ENCODE measurements at regions of chr14 and their contacts with region 1.

Region 1: DNA sequence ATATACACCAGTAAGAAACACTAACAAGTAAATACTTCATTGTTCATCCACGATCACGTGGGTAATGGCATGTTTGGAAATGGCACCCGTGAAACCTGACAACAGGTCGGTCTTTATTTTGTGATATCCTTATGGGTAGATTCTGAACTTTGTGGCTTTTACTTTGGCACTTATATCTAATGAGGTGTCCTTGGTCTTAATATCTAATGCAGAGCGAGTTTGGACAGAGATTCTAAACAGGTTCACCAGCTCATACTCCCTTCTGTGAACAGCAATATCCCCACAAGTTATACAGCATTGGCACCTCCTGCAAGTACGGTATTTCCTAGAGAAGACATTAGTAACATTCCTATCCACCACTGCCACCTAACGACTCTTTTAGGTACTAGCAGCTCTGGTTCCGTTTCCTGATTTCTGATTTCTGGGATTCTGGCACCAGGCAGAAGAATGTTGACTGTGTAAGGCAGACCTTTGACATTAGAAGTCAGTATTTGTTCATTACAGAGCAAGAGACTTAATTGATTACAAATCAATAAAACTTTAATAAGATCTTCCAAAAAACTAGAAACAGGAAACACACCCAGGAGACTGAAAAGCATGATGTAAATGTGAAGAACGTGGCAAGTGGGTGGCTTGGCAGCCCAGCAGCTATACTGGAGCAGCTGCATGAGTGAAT is 2.4 kb downstream of the ANG start:
- DNase-seq: peak in 7 of 9 donors; percentile 48 to 69 (median 63)
- ATAC-seq: peak; percentile 97
- H3K4me3 ChIP-seq: no peak overlapping the region
- H3K4me3 Mint-ChIP-seq: no peak overlapping the region
- H3K27ac ChIP-seq: no peak overlapping the region
- H3K27ac Mint-ChIP-seq: peak overlapping the region in 1 of 9 donors; percentile 32
- H3K4me1 ChIP-seq: no peaks in the 10 kb centered on the region
- H3K4me1 Mint-ChIP-seq: peaks cover 0 to 16% (median 6%) of the 10 kb centered on the region in 7 donors
- H3K27me3 ChIP-seq: no peaks in the 10 kb centered on the region
- H3K27me3 Mint-ChIP-seq: no peaks in the 10 kb centered on the region

Region 2: GRCh38 chr14:20305265-20306078 is 385.5 kb before region 1 on chr14 and contains the start of gene TTC5:
- CTCF ChIA-PET with region 1: no interaction called
- POLR2A ChIA-PET with region 1: no interaction called
- intact Hi-C with region 1: no loop called
- DNase-seq: peak; percentile 82 to 96 (median 89)
- ATAC-seq: peak; percentile 100
- H3K4me3 ChIP-seq: peak within 1 kb of the TSS; percentile 64
- H3K4me3 Mint-ChIP-seq: peak within 1 kb of the TSS; percentile 88 to 99 (median 94)
- H3K27ac ChIP-seq: peak within 1 kb of the TSS; percentile 75
- H3K27ac Mint-ChIP-seq: peak within 1 kb of the TSS; percentile 78 to 95 (median 90)
- H3K4me1 ChIP-seq: peaks cover 9 to 14% of the 10 kb centered on the region in 2 donors
- H3K4me1 Mint-ChIP-seq: peaks cover 22 to 44% (median 38%) of the 10 kb centered on the region in 7 donors
- H3K27me3 ChIP-seq: no peaks in the 10 kb centered on the region
- H3K27me3 Mint-ChIP-seq: no peaks in the 10 kb centered on the region
- total RNA-seq, gene TTC5: 16.4 to 30.1 (median 20.3) TPM

Region 3: GRCh38 chr14:20327005-20327869 is 363.7 kb before region 1 on chr14:
- CTCF ChIA-PET with region 1: interaction called, 39 read pairs
- POLR2A ChIA-PET with region 1: no interaction called
- intact Hi-C with region 1: loop called in 1 of 2 experiments (anchors 1 kb)
- DNase-seq: peak in 7 of 9 donors; percentile 44 to 74 (median 66)
- ATAC-seq: peak; percentile 81
- H3K4me3 ChIP-seq: no peak overlapping the region
- H3K4me3 Mint-ChIP-seq: peak overlapping the region in 5 of 10 donors; percentile 2 to 52 (median 26)
- H3K27ac ChIP-seq: no peak overlapping the region
- H3K27ac Mint-ChIP-seq: peak overlapping the region; percentile 35 to 93 (median 66)
- H3K4me1 ChIP-seq: peaks cover 0 to 4% of the 10 kb centered on the region in 2 donors
- H3K4me1 Mint-ChIP-seq: peaks cover 9 to 42% (median 27%) of the 10 kb centered on the region in 7 donors
- H3K27me3 ChIP-seq: no peaks in the 10 kb centered on the region
- H3K27me3 Mint-ChIP-seq: no peaks in the 10 kb centered on the region

Region 4: GRCh38 chr14:20652996-20653975 is 37.7 kb before region 1 on chr14:
- CTCF ChIA-PET with region 1: interaction called, 17 read pairs
- POLR2A ChIA-PET with region 1: no interaction called
- intact Hi-C with region 1: no loop called
- DNase-seq: peak in 8 of 9 donors; percentile 22 to 61 (median 36)
- ATAC-seq: peak; percentile 56
- H3K4me3 ChIP-seq: no peak overlapping the region
- H3K4me3 Mint-ChIP-seq: peak overlapping the region; percentile 43 to 73 (median 61)
- H3K27ac ChIP-seq: no peak overlapping the region
- H3K27ac Mint-ChIP-seq: peak overlapping the region in 1 of 9 donors; percentile 69
- H3K4me1 ChIP-seq: peaks cover 0 to 6% of the 10 kb centered on the region in 2 donors
- H3K4me1 Mint-ChIP-seq: peaks cover 18 to 34% (median 31%) of the 10 kb centered on the region in 7 donors
- H3K27me3 ChIP-seq: peaks cover 9 to 25% of the 10 kb centered on the region in 2 donors
- H3K27me3 Mint-ChIP-seq: peaks cover 71 to 78% (median 73%) of the 10 kb centered on the region in 5 donors

Region 5: DNA sequence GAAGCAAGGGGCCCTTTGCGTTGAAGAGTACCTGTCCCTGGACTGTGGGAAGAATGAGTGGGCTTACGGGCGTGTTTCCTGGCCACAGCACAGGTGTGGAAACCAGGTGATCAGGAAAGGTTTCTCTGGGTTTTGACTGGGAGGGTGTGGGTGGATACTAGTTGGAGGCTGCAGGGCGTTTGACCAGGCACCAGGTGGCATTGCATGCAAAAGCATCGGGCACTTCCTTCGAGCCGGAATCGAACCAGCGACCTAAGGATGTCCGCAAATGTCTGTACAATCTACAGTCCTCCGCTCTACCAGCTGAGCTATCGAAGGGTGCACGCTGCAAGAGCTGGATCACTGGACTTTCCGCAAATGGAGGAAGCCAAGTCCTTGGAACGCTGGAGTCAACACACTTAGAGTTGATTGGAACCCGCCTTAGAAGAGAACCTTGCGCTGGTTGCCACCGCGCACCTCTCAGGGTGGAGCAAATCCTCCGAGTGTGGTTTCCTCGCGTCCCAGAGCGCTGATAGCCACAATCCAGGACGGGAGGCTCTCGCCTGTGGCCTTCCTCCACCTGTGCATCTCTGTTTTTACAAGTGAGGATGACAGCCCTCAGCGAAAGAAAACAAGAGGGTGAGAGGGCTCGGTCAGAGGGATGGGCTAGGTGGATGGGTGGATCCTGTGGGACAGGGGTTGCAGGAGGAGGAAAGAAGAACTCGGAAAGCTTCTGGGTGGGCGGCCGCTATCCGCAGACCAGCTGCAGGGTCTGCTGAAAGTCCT is 27.8 kb before region 1 on chr14:
- CTCF ChIA-PET with region 1: interaction called, 17 read pairs
- POLR2A ChIA-PET with region 1: interaction called, 3 read pairs
- intact Hi-C with region 1: loop called (anchors 1 kb)
- DNase-seq: peak; percentile 49 to 77 (median 66)
- ATAC-seq: peak; percentile 91
- H3K4me3 ChIP-seq: peak overlapping the region; percentile 59
- H3K4me3 Mint-ChIP-seq: peak overlapping the region; percentile 72 to 86 (median 79)
- H3K27ac ChIP-seq: no peak overlapping the region
- H3K27ac Mint-ChIP-seq: peak overlapping the region in 8 of 9 donors; percentile 18 to 74 (median 39)
- H3K4me1 ChIP-seq: peaks cover 3 to 17% of the 10 kb centered on the region in 2 donors
- H3K4me1 Mint-ChIP-seq: peaks cover 23 to 53% (median 25%) of the 10 kb centered on the region in 7 donors
- H3K27me3 ChIP-seq: no peaks in the 10 kb centered on the region
- H3K27me3 Mint-ChIP-seq: peaks cover 5 to 23% (median 19%) of the 10 kb centered on the region in 5 donors

Region 6: DNA sequence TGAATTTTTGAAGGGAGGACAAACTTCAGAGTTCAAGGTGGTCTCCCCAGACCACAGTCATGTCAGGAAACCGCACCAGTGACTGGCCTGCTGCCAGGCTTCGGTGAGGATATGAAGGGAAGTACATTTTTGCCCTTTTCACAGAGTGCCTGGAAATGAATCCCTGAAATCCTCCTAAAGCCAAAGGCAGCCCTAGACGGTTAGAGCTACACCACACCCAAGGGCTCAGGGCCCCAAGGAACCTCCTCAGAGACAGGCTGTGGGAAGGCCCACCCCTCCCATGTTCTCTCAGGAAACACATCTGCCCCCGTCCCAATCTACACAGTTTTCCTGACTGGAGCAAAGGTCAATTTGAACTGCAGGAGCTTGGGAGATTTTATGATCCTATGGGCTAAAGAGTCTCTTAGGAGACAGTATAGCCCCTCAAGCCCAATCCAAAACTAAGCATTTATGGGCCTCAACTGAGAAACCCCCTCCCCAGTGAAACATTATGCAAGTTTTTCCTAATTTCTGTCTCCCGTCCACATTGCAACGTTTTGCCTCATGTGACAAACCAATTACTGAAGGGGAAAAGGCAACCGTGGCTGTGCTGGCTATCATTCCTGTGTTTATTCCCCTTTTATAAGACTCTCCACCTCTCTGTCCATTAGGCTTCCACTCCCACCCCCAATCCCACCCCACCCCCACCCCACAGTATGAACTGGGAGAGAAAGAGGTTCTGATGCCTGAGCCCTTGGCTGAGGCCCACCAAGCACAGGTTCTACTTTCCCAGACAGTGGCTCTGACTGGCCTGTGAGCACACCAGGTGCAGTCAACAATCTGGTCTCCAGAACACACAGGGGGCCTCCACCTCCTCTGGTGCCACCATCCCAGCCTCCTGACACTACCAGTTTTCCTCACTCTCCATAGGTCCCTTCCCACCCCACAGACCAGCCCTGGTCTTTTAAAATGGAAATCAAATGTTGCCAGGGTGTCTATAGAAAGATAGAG is 121.3 kb after region 1 on chr14:
- CTCF ChIA-PET with region 1: no interaction called
- POLR2A ChIA-PET with region 1: no interaction called
- intact Hi-C with region 1: no loop called
- DNase-seq: no peak
- ATAC-seq: no peak
- H3K4me3 ChIP-seq: no peak overlapping the region
- H3K4me3 Mint-ChIP-seq: no peak overlapping the region
- H3K27ac ChIP-seq: no peak overlapping the region
- H3K27ac Mint-ChIP-seq: no peak overlapping the region
- H3K4me1 ChIP-seq: no peaks in the 10 kb centered on the region
- H3K4me1 Mint-ChIP-seq: peaks cover 0 to 5% (median 0%) of the 10 kb centered on the region in 7 donors
- H3K27me3 ChIP-seq: no peaks in the 10 kb centered on the region
- H3K27me3 Mint-ChIP-seq: peaks cover 0 to 15% (median 0%) of the 10 kb centered on the region in 5 donors

Measured in naive thymus-derived CD4-positive, alpha-beta T cell (primary cell).